HEK293T (cell line): ENCODE measurements at regions of chr12 and their contacts with region 1.

Region 1: GRCh38 chr12:48988030-48988649 is 10.0 kb downstream of the WNT1 start:
- DNase-seq: peak; percentile 82

Region 2: DNA sequence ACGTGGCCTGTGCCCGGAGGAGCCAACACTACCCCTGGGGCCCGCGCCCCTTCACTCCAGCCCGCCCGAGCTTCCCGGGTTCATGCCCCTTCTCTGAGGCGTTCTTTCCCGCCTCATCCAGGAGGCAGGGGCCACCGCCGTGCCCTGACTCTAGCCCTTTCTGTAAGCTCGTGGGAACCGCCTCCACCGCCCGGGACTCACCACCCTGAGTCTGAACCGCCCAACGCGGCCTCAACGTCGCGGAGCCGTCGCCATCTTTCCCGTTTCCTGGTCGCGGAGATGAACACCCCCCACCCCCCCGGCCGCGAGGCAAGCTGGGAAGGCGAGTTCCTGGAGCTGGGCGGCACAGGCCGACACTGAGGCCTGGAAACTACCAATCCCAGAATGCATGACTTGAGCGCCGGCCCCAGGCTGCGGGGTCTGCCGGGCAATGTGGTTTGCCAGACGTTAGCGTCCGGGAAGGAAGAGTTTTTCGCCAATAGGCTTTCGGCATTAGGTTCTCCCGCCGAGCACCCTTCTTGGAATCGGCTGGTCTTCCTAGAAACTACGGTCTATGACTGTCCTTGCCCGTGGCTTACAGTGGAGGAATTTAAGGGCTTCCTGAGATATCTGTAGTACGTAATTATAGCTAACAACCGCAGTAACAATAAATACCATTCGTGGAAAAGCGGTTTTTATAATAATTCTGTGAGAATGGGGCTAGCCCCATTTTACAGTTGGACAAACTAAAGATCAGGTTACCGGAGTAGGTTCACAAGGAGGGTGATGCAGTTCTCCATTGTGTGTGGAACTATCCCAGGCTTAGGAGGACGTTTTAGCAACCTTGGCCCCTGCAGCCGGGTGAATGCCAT is 136.0 kb before region 1 on chr12 and contains the start of gene DDX23:
- CTCF ChIA-PET with region 1: interaction called, 13 read pairs
- POLR2A ChIA-PET with region 1: interaction called, 12 read pairs
- DNase-seq: peak; percentile 97

Region 3: GRCh38 chr12:48890657-48891418 is 97.3 kb before region 1 on chr12:
- CTCF ChIA-PET with region 1: interaction called, 12 read pairs
- POLR2A ChIA-PET with region 1: no interaction called
- DNase-seq: peak; percentile 85

Region 4: GRCh38 chr12:48936379-48936979 is 51.7 kb before region 1 on chr12:
- CTCF ChIA-PET with region 1: interaction called, 10 read pairs
- POLR2A ChIA-PET with region 1: no interaction called
- DNase-seq: peak; percentile 90

Region 5: GRCh38 chr12:48957141-48958048 is 30.7 kb before region 1 on chr12 and contains the start of gene ARF3:
- CTCF ChIA-PET with region 1: interaction called, 11 read pairs
- POLR2A ChIA-PET with region 1: interaction called, 8 read pairs
- DNase-seq: peak; percentile 98

Region 6: DNA sequence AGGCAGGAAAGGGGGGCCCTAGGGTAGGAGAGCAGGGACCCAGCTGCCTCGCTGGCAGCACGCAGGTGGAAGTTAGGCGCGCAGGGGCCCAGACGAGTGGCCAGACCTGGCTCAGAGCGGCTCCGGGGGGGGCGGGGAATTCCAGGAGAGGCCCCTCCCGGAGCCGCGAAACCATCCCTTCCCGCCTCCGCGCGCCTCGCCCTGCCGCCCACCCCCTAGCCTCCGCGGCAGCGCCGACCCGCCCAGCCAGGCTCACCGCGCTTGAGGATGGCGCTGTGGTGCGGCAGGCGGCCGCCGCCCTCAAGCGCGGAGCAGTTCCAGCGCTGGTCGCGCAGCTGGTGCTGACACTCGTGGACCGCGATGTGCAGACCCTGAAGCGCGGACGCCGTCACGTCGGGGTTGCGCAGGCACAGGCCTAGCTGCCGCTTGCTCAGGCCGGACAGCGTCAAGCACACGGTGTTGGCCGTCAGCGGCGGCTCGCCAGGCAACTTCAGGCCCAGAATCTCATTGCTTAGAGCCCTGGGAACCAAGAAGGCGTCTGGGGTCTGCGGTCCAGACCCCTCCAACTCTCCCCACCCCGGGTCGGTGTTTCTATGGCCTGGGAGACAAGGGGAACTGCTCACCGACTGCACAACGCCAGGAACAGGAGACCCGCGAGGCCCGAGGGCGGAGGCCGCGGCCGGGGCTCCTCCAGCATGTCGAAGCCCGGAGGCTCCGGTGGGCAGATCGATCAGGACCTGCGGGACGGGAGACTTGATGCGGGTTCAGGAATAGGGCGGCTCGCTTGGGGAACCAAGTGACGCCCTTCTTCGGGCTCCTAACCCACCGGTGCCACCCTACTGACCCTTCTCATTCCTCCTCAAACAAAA is 18.1 kb before region 1 on chr12:
- CTCF ChIA-PET with region 1: interaction called, 26 read pairs
- POLR2A ChIA-PET with region 1: interaction called, 3 read pairs
- DNase-seq: no peak

Region 7: GRCh38 chr12:48977315-48978281 is 10.5 kb before region 1 on chr12:
- CTCF ChIA-PET with region 1: interaction called, 49 read pairs
- POLR2A ChIA-PET with region 1: no interaction called
- DNase-seq: peak; percentile 57

Region 8: GRCh38 chr12:49049566-49050413 is 61.6 kb after region 1 on chr12:
- CTCF ChIA-PET with region 1: no interaction called
- POLR2A ChIA-PET with region 1: no interaction called
- DNase-seq: no peak